ENCODE measurements at regions of chr5 and their contacts with region 1.

Region 1: DNA sequence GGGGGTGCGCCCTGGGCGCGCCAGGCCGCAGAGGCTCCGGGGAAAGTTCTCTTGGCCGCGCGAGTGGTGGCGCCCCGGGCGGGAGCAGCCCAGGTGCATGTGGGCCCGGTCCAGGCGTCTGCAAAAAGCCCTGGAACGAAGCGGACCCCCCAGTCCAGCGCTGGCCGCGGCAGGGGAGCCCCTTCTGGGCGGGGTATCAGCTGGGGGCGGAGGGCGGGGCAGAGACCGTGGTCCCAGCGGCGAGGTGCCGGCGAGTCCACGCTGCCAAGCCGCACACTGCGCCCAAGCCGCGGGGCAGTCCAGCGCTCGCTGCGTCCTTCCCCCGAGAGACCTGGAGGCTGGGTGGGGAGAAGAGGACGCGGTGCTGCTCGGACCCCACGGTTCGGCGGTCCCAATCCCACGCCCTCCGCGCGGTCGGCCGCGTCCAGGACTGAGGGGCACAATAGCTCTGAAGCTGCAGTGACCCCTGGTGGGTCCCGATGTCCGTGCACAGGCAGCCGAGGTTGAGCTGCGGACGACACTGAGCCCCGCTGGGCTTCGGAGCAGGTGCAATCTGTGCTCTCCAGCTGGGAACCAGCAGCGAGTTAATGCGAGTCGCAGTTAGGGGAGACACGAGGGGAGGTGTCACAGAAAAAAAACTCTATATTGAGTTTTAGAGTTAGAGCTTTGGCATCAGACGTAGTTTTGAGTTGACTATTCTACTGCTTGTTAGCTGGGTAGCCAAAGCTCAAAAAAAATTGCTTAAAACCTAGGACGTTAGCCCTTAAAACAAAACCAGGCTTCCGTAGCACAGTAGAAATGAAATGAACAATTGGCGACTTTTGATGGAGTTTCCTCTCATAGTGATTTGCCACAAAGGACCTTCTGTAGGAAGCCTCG is 1.1 kb upstream of the EPB41L4A start:
- DNase-seq: peak; percentile 88 to 95
- H3K4me3 ChIP-seq: peak overlapping the region; percentile 69 to 86 (median 78)
- H3K27ac ChIP-seq: peak overlapping the region; percentile 83 to 96 (median 85)
- H3K4me1 ChIP-seq: peaks cover 0 to 31% (median 12%) of the 10 kb centered on the region in 4 donors
- H3K27me3 ChIP-seq: peaks cover 0 to 19% (median 7%) of the 10 kb centered on the region in 3 donors
- CTCF ChIP-seq: peak in 6 of 7 experiments; percentile 27 to 95 (median 84)
- EP300 ChIP-seq: no peak
- POLR2A ChIP-seq: no peak

Region 2: DNA sequence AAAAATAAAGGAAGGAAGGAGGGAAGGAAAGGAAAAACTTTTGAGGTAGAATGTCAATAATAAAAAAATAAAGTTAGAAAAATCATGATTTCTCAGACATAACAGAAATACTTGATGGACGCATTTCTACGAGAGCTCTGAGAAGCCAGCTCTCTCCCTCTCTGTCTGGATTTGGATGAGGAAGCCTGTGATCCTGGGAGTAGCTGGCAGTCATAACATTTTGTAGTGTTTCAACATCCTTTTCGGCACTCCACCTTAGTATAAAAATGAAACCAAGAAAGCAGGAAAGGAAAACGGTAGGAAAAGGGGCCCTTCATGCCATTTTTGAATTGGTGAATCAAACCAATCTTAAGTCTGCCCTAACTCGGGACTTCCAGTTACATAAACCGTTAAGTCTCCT is 322.5 kb before region 1 on chr5:
- intact Hi-C with region 1: no loop called
- DNase-seq: no peak
- H3K4me3 ChIP-seq: no peak overlapping the region
- H3K27ac ChIP-seq: no peak overlapping the region
- H3K4me1 ChIP-seq: no peaks in the 10 kb centered on the region
- H3K27me3 ChIP-seq: no peaks in the 10 kb centered on the region
- CTCF ChIP-seq: no peak
- EP300 ChIP-seq: no peak
- POLR2A ChIP-seq: no peak

Region 3: DNA sequence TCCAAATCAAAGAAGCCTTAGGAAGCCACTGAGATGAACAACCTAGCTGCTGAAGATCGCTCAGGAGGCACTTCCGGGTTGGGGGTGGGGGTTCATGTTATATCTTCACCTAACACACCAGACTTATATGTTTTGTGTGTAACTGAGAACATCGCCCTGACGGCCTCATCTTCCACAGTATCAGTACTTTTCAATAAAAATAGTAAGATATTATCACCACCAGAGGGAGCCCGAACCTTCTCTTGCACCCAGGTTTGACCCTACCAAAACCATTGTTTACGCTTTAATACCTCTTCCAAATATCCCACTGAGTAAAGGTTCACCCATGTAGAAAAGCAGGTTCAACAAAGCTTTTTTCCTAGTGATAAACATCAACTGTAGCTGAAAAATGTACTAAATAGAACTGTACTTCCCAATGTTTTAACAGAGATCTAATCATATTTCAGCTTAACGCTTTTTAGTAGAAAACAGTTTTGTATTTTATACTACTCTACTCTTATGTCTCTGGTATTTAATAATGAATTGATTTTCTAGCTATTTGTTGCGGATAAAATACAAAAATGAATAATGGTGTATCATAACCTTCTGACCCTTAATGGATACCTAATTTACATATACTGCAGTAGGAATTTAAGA is 245.1 kb before region 1 on chr5:
- intact Hi-C with region 1: loop called (anchors 10 kb)
- DNase-seq: peak in 1 of 2 donors; percentile 76
- H3K4me3 ChIP-seq: no peak overlapping the region
- H3K27ac ChIP-seq: no peak overlapping the region
- H3K4me1 ChIP-seq: peaks cover 0 to 6% (median 0%) of the 10 kb centered on the region in 4 donors
- H3K27me3 ChIP-seq: no peaks in the 10 kb centered on the region
- CTCF ChIP-seq: peak in 3 of 7 experiments; percentile 37 to 65 (median 51)
- EP300 ChIP-seq: no peak
- POLR2A ChIP-seq: no peak

Region 4: GRCh38 chr5:112186401-112186990 is 233.7 kb before region 1 on chr5:
- intact Hi-C with region 1: no loop called
- DNase-seq: peak in 1 of 2 donors; percentile 66
- H3K4me3 ChIP-seq: no peak overlapping the region
- H3K27ac ChIP-seq: no peak overlapping the region
- H3K4me1 ChIP-seq: no peaks in the 10 kb centered on the region
- H3K27me3 ChIP-seq: no peaks in the 10 kb centered on the region
- CTCF ChIP-seq: peak in 3 of 7 experiments; percentile 8 to 38 (median 38)
- EP300 ChIP-seq: no peak
- POLR2A ChIP-seq: no peak

Region 5: GRCh38 chr5:112208699-112209615 is 211.3 kb before region 1 on chr5:
- intact Hi-C with region 1: loop called (anchors 10 kb)
- DNase-seq: no peak
- H3K4me3 ChIP-seq: no peak overlapping the region
- H3K27ac ChIP-seq: no peak overlapping the region
- H3K4me1 ChIP-seq: no peaks in the 10 kb centered on the region
- H3K27me3 ChIP-seq: no peaks in the 10 kb centered on the region
- CTCF ChIP-seq: no peak
- EP300 ChIP-seq: no peak
- POLR2A ChIP-seq: no peak

Measured in stomach (tissue), 19 donors.